ENCODE measurements at regions of chr19 and their contacts with region 1.

Region 1: GRCh38 chr19:48468775-48469288 is 337 bp upstream of the CYTH2 start:
- DNase-seq: peak; percentile 100
- H3K4me3 Mint-ChIP-seq: peak overlapping the region; percentile 77
- H3K27ac Mint-ChIP-seq: peak overlapping the region; percentile 97
- H3K4me1 Mint-ChIP-seq: peaks cover 12% of the 10 kb centered on the region
- H3K27me3 Mint-ChIP-seq: no peaks in the 10 kb centered on the region
- CTCF ChIP-seq: no peak

Region 2: GRCh38 chr19:48487996-48488395 is 19.2 kb after region 1 on chr19:
- CTCF ChIA-PET with region 1: interaction called, 12 read pairs
- POLR2A ChIA-PET with region 1: interaction called, 22 read pairs
- intact Hi-C with region 1: loop called (anchors 1 kb)
- DNase-seq: peak; percentile 97
- H3K4me3 Mint-ChIP-seq: peak overlapping the region; percentile 49
- H3K27ac Mint-ChIP-seq: peak overlapping the region; percentile 83
- H3K4me1 Mint-ChIP-seq: peaks cover 48% of the 10 kb centered on the region
- H3K27me3 Mint-ChIP-seq: no peaks in the 10 kb centered on the region
- CTCF ChIP-seq: no peak

Region 3: GRCh38 chr19:48518207-48518606 is 49.4 kb after region 1 on chr19:
- CTCF ChIA-PET with region 1: no interaction called
- POLR2A ChIA-PET with region 1: no interaction called
- intact Hi-C with region 1: no loop called
- DNase-seq: no peak
- H3K4me3 Mint-ChIP-seq: no peak overlapping the region
- H3K27ac Mint-ChIP-seq: no peak overlapping the region
- H3K4me1 Mint-ChIP-seq: no peaks in the 10 kb centered on the region
- H3K27me3 Mint-ChIP-seq: no peaks in the 10 kb centered on the region
- CTCF ChIP-seq: no peak

Measured in MCF 10A (cell line).